B cell (primary cell): ENCODE measurements at regions of chr5 and their contacts with region 1.

Region 1: GRCh38 chr5:158898185-158899177 is 201.2 kb downstream of the EBF1 start:
- DNase-seq: peak; percentile 77
- ATAC-seq: peak; percentile 79
- H3K4me3 ChIP-seq: peak overlapping the region in 3 of 5 experiments; percentile 1 to 21 (median 18)
- H3K4me3 Mint-ChIP-seq: peak overlapping the region; percentile 58
- H3K27ac ChIP-seq: peak overlapping the region; percentile 76 to 83
- H3K27ac Mint-ChIP-seq: peak overlapping the region; percentile 70
- H3K4me1 ChIP-seq: peaks cover 35% of the 10 kb centered on the region in 2 donors
- H3K4me1 Mint-ChIP-seq: peaks cover 77% of the 10 kb centered on the region
- H3K27me3 ChIP-seq: no peaks in the 10 kb centered on the region
- H3K27me3 Mint-ChIP-seq: no peaks in the 10 kb centered on the region
- CTCF ChIP-seq: no peak

Region 2: GRCh38 chr5:158758675-158759074 is 139.8 kb before region 1 on chr5:
- CTCF ChIA-PET with region 1: no interaction called
- POLR2A ChIA-PET with region 1: no interaction called
- intact Hi-C with region 1: no loop called
- DNase-seq: no peak
- ATAC-seq: no peak
- H3K4me3 ChIP-seq: no peak overlapping the region
- H3K4me3 Mint-ChIP-seq: no peak overlapping the region
- H3K27ac ChIP-seq: no peak overlapping the region
- H3K27ac Mint-ChIP-seq: no peak overlapping the region
- H3K4me1 ChIP-seq: peaks cover 27 to 32% of the 10 kb centered on the region in 2 donors
- H3K4me1 Mint-ChIP-seq: peaks cover 56% of the 10 kb centered on the region
- H3K27me3 ChIP-seq: no peaks in the 10 kb centered on the region
- H3K27me3 Mint-ChIP-seq: no peaks in the 10 kb centered on the region
- CTCF ChIP-seq: no peak

Region 3: GRCh38 chr5:158777647-158778350 is 120.7 kb before region 1 on chr5:
- CTCF ChIA-PET with region 1: no interaction called
- POLR2A ChIA-PET with region 1: no interaction called
- intact Hi-C with region 1: loop called (anchors 5 kb)
- DNase-seq: no peak
- ATAC-seq: no peak
- H3K4me3 ChIP-seq: no peak overlapping the region
- H3K4me3 Mint-ChIP-seq: peak overlapping the region; percentile 27
- H3K27ac ChIP-seq: peak overlapping the region in 1 of 2 donors; percentile 10
- H3K27ac Mint-ChIP-seq: peak overlapping the region; percentile 64
- H3K4me1 ChIP-seq: peaks cover 82 to 89% of the 10 kb centered on the region in 2 donors
- H3K4me1 Mint-ChIP-seq: peaks cover 89% of the 10 kb centered on the region
- H3K27me3 ChIP-seq: no peaks in the 10 kb centered on the region
- H3K27me3 Mint-ChIP-seq: no peaks in the 10 kb centered on the region
- CTCF ChIP-seq: no peak

Region 4: DNA sequence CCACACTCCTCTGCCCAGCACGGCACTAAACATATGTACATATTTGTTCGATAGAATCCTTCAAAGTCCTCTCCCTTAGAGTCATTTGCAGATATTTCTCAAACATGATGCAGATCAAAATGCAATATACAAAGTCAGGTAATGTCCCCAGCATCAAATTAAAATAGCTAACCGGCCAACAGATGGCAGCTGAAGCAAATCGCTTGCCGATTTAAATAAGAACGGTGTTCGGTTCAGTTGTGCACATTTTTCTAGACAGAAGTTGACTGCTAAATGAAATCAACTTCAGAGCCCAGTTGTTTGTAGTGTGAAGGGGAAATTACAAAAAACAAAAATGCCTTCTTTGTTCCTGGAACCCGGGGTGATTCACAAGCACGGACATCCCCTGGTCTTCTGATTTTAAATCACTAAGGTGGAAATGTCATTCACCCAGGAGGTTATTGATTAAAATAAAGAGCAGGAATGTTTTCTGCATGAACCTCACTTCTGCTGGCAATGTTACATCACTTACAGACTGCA is 17.9 kb before region 1 on chr5:
- CTCF ChIA-PET with region 1: interaction called, 5 read pairs
- POLR2A ChIA-PET with region 1: no interaction called
- intact Hi-C with region 1: loop called (anchors 1 kb)
- DNase-seq: peak; percentile 54
- ATAC-seq: peak; percentile 25
- H3K4me3 ChIP-seq: peak overlapping the region in 2 of 5 experiments; percentile 13 to 29
- H3K4me3 Mint-ChIP-seq: peak overlapping the region; percentile 73
- H3K27ac ChIP-seq: peak overlapping the region; percentile 71 to 85
- H3K27ac Mint-ChIP-seq: peak overlapping the region; percentile 89
- H3K4me1 ChIP-seq: peaks cover 89 to 97% of the 10 kb centered on the region in 2 donors
- H3K4me1 Mint-ChIP-seq: peaks cover 92% of the 10 kb centered on the region
- H3K27me3 ChIP-seq: no peaks in the 10 kb centered on the region
- H3K27me3 Mint-ChIP-seq: no peaks in the 10 kb centered on the region
- CTCF ChIP-seq: no peak

Region 5: DNA sequence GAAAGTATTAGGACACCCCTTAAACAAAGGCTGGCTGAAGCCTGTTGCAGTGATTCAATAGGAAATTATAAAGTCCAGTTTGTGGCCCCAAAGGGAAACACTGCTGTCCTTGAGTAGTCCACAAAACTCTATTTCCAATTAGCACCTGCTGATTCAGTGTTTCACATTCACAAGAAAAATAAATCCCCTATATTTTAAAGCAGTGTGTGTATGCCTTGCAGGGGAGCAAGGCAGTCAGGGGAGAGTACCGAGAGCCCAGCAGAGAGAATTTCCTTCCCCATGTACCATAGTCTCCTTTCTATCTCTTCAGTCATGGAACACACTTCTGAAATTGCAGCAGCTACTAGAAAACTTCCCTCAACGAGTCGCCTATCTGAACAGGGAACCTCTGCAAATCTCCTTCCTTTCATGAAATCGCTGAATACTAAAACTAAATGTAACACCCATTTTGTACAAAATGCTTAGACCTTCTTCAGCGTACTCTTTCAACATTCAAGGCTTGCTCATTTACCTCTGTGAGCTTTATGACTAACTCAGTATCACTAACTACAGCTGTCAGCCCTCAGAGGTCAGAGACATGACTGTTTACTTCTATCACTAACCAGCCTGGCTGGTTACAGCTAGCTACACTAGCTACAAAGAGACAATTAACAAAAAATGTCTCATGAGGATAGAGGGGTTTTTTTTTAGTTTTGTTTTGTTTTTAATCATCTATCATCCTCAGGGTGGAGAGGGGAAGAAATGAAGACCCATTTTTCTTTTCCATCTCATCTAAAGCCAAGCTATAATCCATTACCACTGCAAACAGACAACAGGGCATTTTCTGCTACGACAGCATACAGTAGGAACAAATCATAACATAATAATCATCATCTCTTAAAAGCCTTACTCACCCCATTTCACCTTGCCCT is 12.6 kb after region 1 on chr5:
- CTCF ChIA-PET with region 1: interaction called, 3 read pairs
- POLR2A ChIA-PET with region 1: no interaction called
- intact Hi-C with region 1: loop called (anchors 1 kb)
- DNase-seq: peak; percentile 32
- ATAC-seq: peak; percentile 60
- H3K4me3 ChIP-seq: no peak overlapping the region
- H3K4me3 Mint-ChIP-seq: peak overlapping the region; percentile 60
- H3K27ac ChIP-seq: peak overlapping the region in 1 of 2 donors; percentile 55
- H3K27ac Mint-ChIP-seq: peak overlapping the region; percentile 46
- H3K4me1 ChIP-seq: peaks cover 35 to 45% of the 10 kb centered on the region in 2 donors
- H3K4me1 Mint-ChIP-seq: peaks cover 92% of the 10 kb centered on the region
- H3K27me3 ChIP-seq: no peaks in the 10 kb centered on the region
- H3K27me3 Mint-ChIP-seq: no peaks in the 10 kb centered on the region
- CTCF ChIP-seq: no peak

Region 6: DNA sequence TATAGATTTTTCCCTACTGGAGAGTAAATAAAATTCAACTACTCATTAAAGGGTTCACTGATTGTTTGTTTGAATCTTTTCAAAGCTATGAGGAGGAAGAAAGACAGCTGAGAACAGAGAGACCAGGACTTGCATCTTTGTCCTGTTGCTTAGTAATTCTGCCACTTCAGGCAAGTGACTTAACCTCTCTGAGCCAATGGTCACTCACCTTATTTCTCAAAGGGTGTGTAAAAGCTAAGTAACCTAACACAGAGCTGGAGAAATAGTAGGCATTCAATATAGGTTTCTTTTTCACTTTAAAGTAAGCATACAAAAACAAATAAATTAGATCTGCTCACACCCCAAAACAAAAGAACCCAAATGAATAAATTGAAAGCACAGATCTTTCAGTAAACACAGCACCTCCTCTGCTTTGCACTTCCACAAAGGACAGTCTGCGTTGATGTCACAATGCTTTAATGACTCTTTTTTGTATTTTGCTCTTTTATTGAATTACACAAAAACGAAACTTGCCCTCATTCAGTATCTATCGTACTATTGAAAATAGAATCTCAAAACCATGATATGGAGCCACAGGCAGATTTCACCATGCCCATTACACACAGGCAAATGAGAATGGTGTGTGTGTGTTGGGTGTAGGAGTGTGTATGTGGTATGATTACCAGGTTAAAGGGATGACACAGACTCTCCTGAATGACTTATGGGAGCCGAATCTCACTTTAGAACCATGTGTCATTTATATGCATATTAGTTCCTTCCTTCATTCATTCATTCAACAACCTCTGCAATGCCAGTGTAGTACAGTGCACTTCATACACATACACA is 35.2 kb after region 1 on chr5:
- CTCF ChIA-PET with region 1: no interaction called
- POLR2A ChIA-PET with region 1: no interaction called
- intact Hi-C with region 1: loop called (anchors 5 kb)
- DNase-seq: no peak
- ATAC-seq: no peak
- H3K4me3 ChIP-seq: no peak overlapping the region
- H3K4me3 Mint-ChIP-seq: no peak overlapping the region
- H3K27ac ChIP-seq: peak overlapping the region in 1 of 2 donors; percentile 6
- H3K27ac Mint-ChIP-seq: no peak overlapping the region
- H3K4me1 ChIP-seq: peaks cover 16 to 24% of the 10 kb centered on the region in 2 donors
- H3K4me1 Mint-ChIP-seq: peaks cover 83% of the 10 kb centered on the region
- H3K27me3 ChIP-seq: no peaks in the 10 kb centered on the region
- H3K27me3 Mint-ChIP-seq: no peaks in the 10 kb centered on the region
- CTCF ChIP-seq: no peak